A549 (cell line): ENCODE measurements at regions of chr5 and their contacts with region 1.

Region 1: DNA sequence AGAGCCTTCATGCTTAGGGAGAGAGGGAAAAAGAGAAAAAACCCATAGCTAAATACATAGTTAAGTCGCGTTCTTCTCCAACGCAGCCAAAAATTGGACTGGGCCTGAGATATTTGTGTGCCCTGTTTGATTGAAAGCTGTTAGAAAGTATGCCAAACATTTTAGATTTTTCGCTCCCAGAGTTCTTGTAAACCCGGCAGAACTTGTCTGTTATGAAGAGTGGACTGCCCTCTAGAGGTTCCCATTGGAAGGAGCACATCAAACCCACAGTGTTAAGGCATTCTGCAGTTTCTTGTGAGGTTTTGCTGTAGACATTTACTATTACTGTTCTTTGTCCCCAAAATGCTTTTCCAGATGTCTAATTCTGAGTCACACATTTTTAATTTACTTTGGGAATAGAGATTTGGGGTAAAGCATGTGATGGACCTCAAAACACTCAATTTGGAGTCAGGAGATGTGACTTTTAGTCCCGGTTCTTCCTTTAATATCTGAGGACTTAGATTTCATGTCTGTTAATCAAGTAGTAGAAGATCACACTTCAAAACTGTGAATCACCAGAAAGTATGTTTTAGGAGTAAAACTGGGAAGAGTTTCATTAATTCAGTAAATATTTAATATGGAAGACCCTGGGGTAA is 96.6 kb downstream of the PCSK1 start:
- DNase-seq: peak; percentile 48 to 88
- ATAC-seq: peak; percentile 88 to 95
- H3K4me3 ChIP-seq: no peak overlapping the region
- H3K27ac ChIP-seq: peak overlapping the region; percentile 70 to 75
- H3K4me1 ChIP-seq: peaks cover 46% of the 10 kb centered on the region
- CTCF ChIP-seq: peak; percentile 90
- EP300 ChIP-seq: no peak
- POLR2A ChIP-seq: no peak
- RAD21 ChIP-seq: peak; percentile 97 to 98

Region 2: GRCh38 chr5:95846554-95847260 is 489.8 kb before region 1 on chr5:
- CTCF ChIA-PET with region 1: interaction called, 10 read pairs
- POLR2A ChIA-PET with region 1: no interaction called
- DNase-seq: peak; percentile 76 to 89
- ATAC-seq: peak; percentile 88 to 92
- H3K4me3 ChIP-seq: no peak overlapping the region
- H3K27ac ChIP-seq: peak overlapping the region; percentile 58 to 70
- H3K4me1 ChIP-seq: peaks cover 33% of the 10 kb centered on the region
- CTCF ChIP-seq: peak; percentile 98
- EP300 ChIP-seq: no peak
- POLR2A ChIP-seq: no peak
- RAD21 ChIP-seq: peak; percentile 97 to 98

Region 3: DNA sequence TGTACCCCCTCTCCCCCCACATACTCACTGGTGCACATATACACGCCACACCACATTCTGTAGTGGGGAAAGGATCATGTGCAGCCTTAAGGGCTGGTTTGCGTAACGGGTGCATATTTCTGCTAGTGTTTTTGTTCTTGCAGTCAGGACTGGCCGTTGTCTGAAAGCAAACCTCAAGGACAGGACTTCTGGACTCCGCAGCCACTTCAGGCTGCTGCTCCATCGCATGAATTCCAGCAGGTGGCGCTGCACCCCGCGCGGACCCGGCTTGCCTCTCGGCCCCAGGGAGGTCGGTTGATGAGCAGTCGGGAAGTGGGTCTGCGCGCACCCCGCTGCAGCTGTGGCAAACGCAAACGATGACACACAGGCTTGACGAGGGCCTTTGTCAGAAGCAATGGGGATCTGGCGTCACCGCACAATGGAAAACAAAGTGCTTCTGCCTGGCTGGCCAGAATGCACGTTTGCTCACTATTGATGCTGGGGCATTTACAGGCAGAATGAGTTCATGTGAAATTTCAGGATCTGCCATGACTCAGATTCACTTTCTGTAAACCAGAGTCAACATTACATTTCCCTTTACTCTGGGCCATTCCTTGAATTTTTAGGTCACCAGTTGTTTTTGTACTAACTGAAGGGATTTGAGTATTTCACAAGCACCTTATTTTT is 477.7 kb before region 1 on chr5:
- CTCF ChIA-PET with region 1: interaction called, 127 read pairs
- POLR2A ChIA-PET with region 1: interaction called, 3 read pairs
- DNase-seq: peak; percentile 94 to 95
- ATAC-seq: peak; percentile 93 to 94
- H3K4me3 ChIP-seq: peak overlapping the region; percentile 16
- H3K27ac ChIP-seq: peak overlapping the region; percentile 74 to 82
- H3K4me1 ChIP-seq: peaks cover 57% of the 10 kb centered on the region
- CTCF ChIP-seq: peak; percentile 95
- EP300 ChIP-seq: peak; percentile 85 to 86; a peak in 4 of 5 replicates
- POLR2A ChIP-seq: no peak
- RAD21 ChIP-seq: peak; percentile 95 to 99

Region 4: DNA sequence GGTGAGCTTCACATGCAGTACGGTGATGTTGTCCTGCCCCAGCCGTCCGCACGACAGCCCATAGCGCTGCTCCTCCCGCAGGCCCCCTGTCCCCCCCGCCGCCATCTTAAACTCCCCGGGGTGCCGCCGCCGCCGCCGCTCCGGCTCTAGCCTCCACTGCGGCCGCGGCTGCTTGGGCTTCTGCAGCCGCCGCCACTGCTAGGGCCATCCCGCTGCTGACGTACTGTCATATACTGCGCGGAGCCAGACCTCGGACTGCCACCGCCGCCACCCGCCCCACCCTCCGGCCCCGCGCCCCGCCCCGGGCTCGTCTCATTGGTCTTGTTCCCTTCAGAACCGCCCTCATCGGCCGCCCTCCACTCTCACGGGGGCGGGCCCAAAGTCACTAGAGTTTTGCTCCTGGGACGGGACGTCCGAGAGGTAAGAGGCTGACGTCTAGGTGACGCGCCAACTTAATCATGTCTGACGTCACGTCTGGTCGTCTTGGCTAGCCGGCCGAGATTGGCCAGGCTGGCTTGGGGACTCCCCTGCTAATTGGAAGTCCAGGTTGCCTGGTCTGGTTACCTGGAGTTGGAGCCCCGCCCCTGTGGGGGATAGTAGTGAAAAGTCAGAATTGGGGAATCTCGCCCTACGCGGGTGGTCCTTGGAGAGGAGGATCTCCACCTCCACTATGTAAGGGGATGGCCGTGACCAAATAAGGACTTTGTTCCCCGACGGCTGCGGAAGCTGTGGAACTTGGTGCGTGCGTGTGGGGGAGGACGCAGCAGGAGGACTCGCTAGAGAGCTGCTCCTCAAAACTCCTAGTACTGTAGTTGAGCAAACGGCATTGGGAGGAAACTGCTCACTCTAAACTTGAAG is 374.6 kb before region 1 on chr5 and contains the start of gene ELL2:
- CTCF ChIA-PET with region 1: interaction called, 76 read pairs
- POLR2A ChIA-PET with region 1: interaction called, 3 read pairs
- DNase-seq: peak; percentile 96 to 100
- ATAC-seq: peak; percentile 88 to 90
- H3K4me3 ChIP-seq: peak within 1 kb of the TSS; percentile 67
- H3K27ac ChIP-seq: peak within 1 kb of the TSS; percentile 89 to 95
- H3K4me1 ChIP-seq: peaks cover 52% of the 10 kb centered on the region
- CTCF ChIP-seq: no peak
- EP300 ChIP-seq: 0 out of 5 replicates have a peak, but pooled peaks of 1 of the 2 experiments have one; percentile 12
- POLR2A ChIP-seq: peak; percentile 50; the same call in 1 of the 2 replicates
- RAD21 ChIP-seq: no peak
- polyA plus RNA-seq, gene ELL2: 23.8 and 24.2 TPM in 2 replicates

Region 5: GRCh38 chr5:96079075-96079474 is 257.4 kb before region 1 on chr5:
- CTCF ChIA-PET with region 1: interaction called, 13 read pairs
- POLR2A ChIA-PET with region 1: no interaction called
- DNase-seq: peak; percentile 58 to 76
- ATAC-seq: peak; percentile 90 to 91
- H3K4me3 ChIP-seq: no peak overlapping the region
- H3K27ac ChIP-seq: peak overlapping the region; percentile 79 to 82
- H3K4me1 ChIP-seq: peaks cover 52% of the 10 kb centered on the region
- CTCF ChIP-seq: no peak
- EP300 ChIP-seq: peak in 1 of 2 experiments; percentile 38; a peak in 1 of 5 replicates
- POLR2A ChIP-seq: no peak
- RAD21 ChIP-seq: peak in 1 of 2 experiments; percentile 36; a peak in 1 of 5 replicates

Region 6: GRCh38 chr5:96292582-96293247 is 43.8 kb before region 1 on chr5:
- CTCF ChIA-PET with region 1: interaction called, 10 read pairs
- POLR2A ChIA-PET with region 1: no interaction called
- DNase-seq: no peak
- ATAC-seq: no peak
- H3K4me3 ChIP-seq: no peak overlapping the region
- H3K27ac ChIP-seq: 0 out of 6 replicates have a peak overlapping the region, but pooled peaks of 1 of the 2 experiments have one; percentile 27
- H3K4me1 ChIP-seq: peaks cover 38% of the 10 kb centered on the region
- CTCF ChIP-seq: no peak
- EP300 ChIP-seq: no peak
- POLR2A ChIP-seq: no peak
- RAD21 ChIP-seq: no peak

Region 7: GRCh38 chr5:96384353-96384752 is 47.9 kb after region 1 on chr5:
- CTCF ChIA-PET with region 1: no interaction called
- POLR2A ChIA-PET with region 1: no interaction called
- DNase-seq: peak; percentile 35 to 50
- ATAC-seq: peak; percentile 92 to 97
- H3K4me3 ChIP-seq: no peak overlapping the region
- H3K27ac ChIP-seq: peak overlapping the region; percentile 48 to 72; a peak in 5 of 6 replicates
- H3K4me1 ChIP-seq: peaks cover 18% of the 10 kb centered on the region
- CTCF ChIP-seq: no peak
- EP300 ChIP-seq: no peak
- POLR2A ChIP-seq: no peak
- RAD21 ChIP-seq: 0 out of 5 replicates have a peak, but pooled peaks of 1 of the 2 experiments have one; percentile 9

Region 8: DNA sequence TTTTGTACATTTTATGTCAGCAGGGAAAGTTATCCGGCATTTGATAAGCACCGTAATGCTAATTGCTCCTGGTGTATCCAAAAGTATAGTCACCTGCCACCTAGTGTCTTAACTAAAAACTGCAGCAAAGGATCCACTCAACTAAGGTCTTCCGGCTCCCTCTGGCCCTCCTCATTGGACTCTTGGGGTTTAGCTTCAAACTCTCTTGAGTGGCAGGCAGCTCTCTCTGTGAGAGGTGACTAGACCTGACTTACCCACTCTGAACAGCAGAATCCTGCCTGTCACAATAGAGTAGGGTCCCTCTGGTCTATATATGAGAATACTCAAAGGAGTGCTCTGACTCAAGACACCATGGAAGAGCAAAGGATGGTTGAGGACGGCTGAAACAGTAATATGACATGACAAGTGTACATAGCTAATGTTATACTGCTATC is 265.4 kb after region 1 on chr5:
- CTCF ChIA-PET with region 1: interaction called, 317 read pairs
- POLR2A ChIA-PET with region 1: no interaction called
- DNase-seq: peak; percentile 68 to 75
- ATAC-seq: peak; percentile 88 to 96
- H3K4me3 ChIP-seq: no peak overlapping the region
- H3K27ac ChIP-seq: peak overlapping the region; percentile 62 to 75
- H3K4me1 ChIP-seq: 0 out of 3 replicates have a peak, but pooled peaks cover 13% of the 10 kb centered on the region
- CTCF ChIP-seq: peak; percentile 85
- EP300 ChIP-seq: no peak
- POLR2A ChIP-seq: no peak
- RAD21 ChIP-seq: peak; percentile 86 to 89